Vagina (tissue), 2 donors: ENCODE measurements at regions of chr10 and their contacts with region 1.

Region 1: DNA sequence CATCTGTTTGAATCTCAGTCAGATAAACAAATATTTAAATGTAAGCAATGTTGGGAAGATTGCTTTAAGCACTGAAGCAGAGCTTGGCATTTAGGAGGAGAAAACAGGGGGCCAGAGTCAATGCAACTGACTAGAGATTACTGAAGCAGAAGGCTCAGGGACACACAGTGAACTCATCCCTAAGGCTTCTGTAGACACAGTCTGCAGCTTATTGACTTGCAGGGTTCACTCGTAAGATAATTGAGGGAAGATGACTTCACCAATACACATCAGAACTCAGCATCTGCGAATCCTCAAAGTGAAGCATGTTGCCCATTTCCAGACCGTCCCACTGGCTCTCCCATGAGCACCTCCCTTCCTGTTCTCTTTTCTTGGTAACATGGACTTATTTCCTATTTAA is 363.4 kb upstream of the PFKP start:
- DNase-seq: no peak
- H3K4me3 ChIP-seq: no peak overlapping the region
- H3K27ac ChIP-seq: no peak overlapping the region
- H3K4me1 ChIP-seq: no peaks in the 10 kb centered on the region
- H3K27me3 ChIP-seq: no peaks in the 10 kb centered on the region
- CTCF ChIP-seq: no peak
- POLR2A ChIP-seq: no peak

Region 2: GRCh38 chr10:2633630-2634029 is 70.3 kb before region 1 on chr10:
- intact Hi-C with region 1: loop called (anchors 2 kb)
- DNase-seq: no peak
- H3K4me3 ChIP-seq: no peak overlapping the region
- H3K27ac ChIP-seq: no peak overlapping the region
- H3K4me1 ChIP-seq: no peaks in the 10 kb centered on the region
- H3K27me3 ChIP-seq: no peaks in the 10 kb centered on the region
- CTCF ChIP-seq: no peak
- POLR2A ChIP-seq: no peak